ENCODE measurements at regions of chr1 and their contacts with region 1.

Region 1: GRCh38 chr1:17236779-17237560 is 11.9 kb upstream of the PADI3 start:
- DNase-seq: peak; percentile 28
- H3K4me3 ChIP-seq: no peak overlapping the region
- H3K27me3 ChIP-seq: no peaks in the 10 kb centered on the region
- CTCF ChIP-seq: peak; percentile 73

Region 2: GRCh38 chr1:17135530-17135929 is 101.4 kb before region 1 on chr1:
- CTCF ChIA-PET with region 1: interaction called, 347 read pairs
- POLR2A ChIA-PET with region 1: interaction called, 3 read pairs
- DNase-seq: no peak
- H3K4me3 ChIP-seq: no peak overlapping the region
- H3K27me3 ChIP-seq: 0 out of 2 replicates have a peak, but pooled peaks cover 2% of the 10 kb centered on the region
- CTCF ChIP-seq: no peak

Region 3: GRCh38 chr1:17168091-17168876 is 68.7 kb before region 1 on chr1:
- CTCF ChIA-PET with region 1: interaction called, 17 read pairs
- POLR2A ChIA-PET with region 1: interaction called, 5 read pairs
- DNase-seq: peak; percentile 82
- H3K4me3 ChIP-seq: no peak overlapping the region
- H3K27me3 ChIP-seq: no peaks in the 10 kb centered on the region
- CTCF ChIP-seq: no peak

Region 4: GRCh38 chr1:17212487-17213121 is 24.4 kb before region 1 on chr1:
- CTCF ChIA-PET with region 1: interaction called, 10 read pairs
- POLR2A ChIA-PET with region 1: interaction called, 7 read pairs
- DNase-seq: peak; percentile 56
- H3K4me3 ChIP-seq: no peak overlapping the region
- H3K27me3 ChIP-seq: no peaks in the 10 kb centered on the region
- CTCF ChIP-seq: no peak

Region 5: GRCh38 chr1:17265162-17265561 is 28.2 kb after region 1 on chr1:
- CTCF ChIA-PET with region 1: interaction called, 10 read pairs
- POLR2A ChIA-PET with region 1: no interaction called
- DNase-seq: no peak
- H3K4me3 ChIP-seq: no peak overlapping the region
- H3K27me3 ChIP-seq: no peaks in the 10 kb centered on the region
- CTCF ChIP-seq: no peak

Region 6: GRCh38 chr1:17335821-17336710 is 99.1 kb after region 1 on chr1:
- CTCF ChIA-PET with region 1: interaction called, 19 read pairs
- POLR2A ChIA-PET with region 1: no interaction called
- DNase-seq: no peak
- H3K4me3 ChIP-seq: no peak overlapping the region
- H3K27me3 ChIP-seq: peaks cover 6% of the 10 kb centered on the region
- CTCF ChIP-seq: peak; percentile 90